Adrenal gland (tissue), 19 donors: ENCODE measurements at regions of chr9 and their contacts with region 1.

Region 1: GRCh38 chr9:126781186-126782052 is 23.4 kb upstream of the ZBTB43 start:
- DNase-seq: peak; percentile 71 to 92 (median 82)
- H3K4me3 ChIP-seq: no peak overlapping the region
- H3K27ac ChIP-seq: no peak overlapping the region
- H3K4me1 ChIP-seq: peaks cover 0 to 4% of the 10 kb centered on the region in 2 donors
- H3K27me3 ChIP-seq: peaks cover 17% of the 10 kb centered on the region
- CTCF ChIP-seq: peak; percentile 82 to 98 (median 95)
- POLR2A ChIP-seq: no peak

Region 2: GRCh38 chr9:126500684-126501382 is 280.6 kb before region 1 on chr9:
- intact Hi-C with region 1: loop called in 1 of 2 experiments (anchors 5 kb)
- DNase-seq: peak; percentile 59 to 92 (median 75)
- H3K4me3 ChIP-seq: no peak overlapping the region
- H3K27ac ChIP-seq: no peak overlapping the region
- H3K4me1 ChIP-seq: peaks cover 0 to 16% of the 10 kb centered on the region in 2 donors
- H3K27me3 ChIP-seq: no peaks in the 10 kb centered on the region
- CTCF ChIP-seq: peak; percentile 88 to 96 (median 94)
- POLR2A ChIP-seq: no peak

Region 3: GRCh38 chr9:126611592-126612325 is 169.7 kb before region 1 on chr9:
- intact Hi-C with region 1: loop called (anchors 5 kb)
- DNase-seq: peak; percentile 58 to 76 (median 75)
- H3K4me3 ChIP-seq: peak overlapping the region in 1 of 4 donors; percentile 44
- H3K27ac ChIP-seq: no peak overlapping the region
- H3K4me1 ChIP-seq: peaks cover 3 to 22% of the 10 kb centered on the region in 2 donors
- H3K27me3 ChIP-seq: peaks cover 64% of the 10 kb centered on the region
- CTCF ChIP-seq: peak; percentile 57 to 82 (median 72)
- POLR2A ChIP-seq: no peak

Region 4: GRCh38 chr9:126704873-126705766 is 76.3 kb before region 1 on chr9:
- intact Hi-C with region 1: loop called (anchors 1 to 2 kb)
- DNase-seq: peak; percentile 71 to 93 (median 85)
- H3K4me3 ChIP-seq: no peak overlapping the region
- H3K27ac ChIP-seq: no peak overlapping the region
- H3K4me1 ChIP-seq: peaks cover 0 to 14% of the 10 kb centered on the region in 2 donors
- H3K27me3 ChIP-seq: peaks cover 9% of the 10 kb centered on the region
- CTCF ChIP-seq: peak; percentile 73 to 96 (median 88)
- POLR2A ChIP-seq: no peak